PC-9 (cell line): ENCODE measurements at regions of chr17 and their contacts with region 1.

Region 1: GRCh38 chr17:29760761-29761696 is 138.3 kb upstream of the CORO6 start:
- DNase-seq: peak; percentile 65 to 85
- H3K4me3 ChIP-seq: peak overlapping the region; percentile 95
- H3K27ac ChIP-seq: peak overlapping the region; percentile 58
- H3K4me1 ChIP-seq: peaks cover 12% of the 10 kb centered on the region
- H3K27me3 ChIP-seq: no peaks in the 10 kb centered on the region
- CTCF ChIP-seq: no peak

Region 2: GRCh38 chr17:29225396-29225795 is 535.6 kb before region 1 on chr17:
- CTCF ChIA-PET with region 1: interaction called, 18 read pairs
- POLR2A ChIA-PET with region 1: no interaction called
- intact Hi-C with region 1: no loop called
- DNase-seq: no peak
- H3K4me3 ChIP-seq: no peak overlapping the region
- H3K27ac ChIP-seq: no peak overlapping the region
- H3K4me1 ChIP-seq: no peaks in the 10 kb centered on the region
- H3K27me3 ChIP-seq: no peaks in the 10 kb centered on the region
- CTCF ChIP-seq: no peak

Region 3: GRCh38 chr17:29664743-29665480 is 96.1 kb before region 1 on chr17:
- CTCF ChIA-PET with region 1: no interaction called
- POLR2A ChIA-PET with region 1: interaction called, 3 read pairs
- intact Hi-C with region 1: loop called (anchors 1 kb)
- DNase-seq: peak; percentile 15 to 92
- H3K4me3 ChIP-seq: peak overlapping the region; percentile 33; the same call in 1 of the 2 replicates
- H3K27ac ChIP-seq: peak overlapping the region; percentile 98
- H3K4me1 ChIP-seq: peaks cover 51% of the 10 kb centered on the region
- H3K27me3 ChIP-seq: no peaks in the 10 kb centered on the region
- CTCF ChIP-seq: no peak

Region 4: GRCh38 chr17:29710891-29711418 is 50.1 kb before region 1 on chr17:
- CTCF ChIA-PET with region 1: no interaction called
- POLR2A ChIA-PET with region 1: interaction called, 11 read pairs
- intact Hi-C with region 1: loop called (anchors 1 kb)
- DNase-seq: peak; percentile 77 to 96
- H3K4me3 ChIP-seq: peak overlapping the region; percentile 9; the same call in 1 of the 2 replicates
- H3K27ac ChIP-seq: peak overlapping the region; percentile 81
- H3K4me1 ChIP-seq: peaks cover 40% of the 10 kb centered on the region
- H3K27me3 ChIP-seq: no peaks in the 10 kb centered on the region
- CTCF ChIP-seq: no peak; the same call in 1 of the 2 replicates

Region 5: DNA sequence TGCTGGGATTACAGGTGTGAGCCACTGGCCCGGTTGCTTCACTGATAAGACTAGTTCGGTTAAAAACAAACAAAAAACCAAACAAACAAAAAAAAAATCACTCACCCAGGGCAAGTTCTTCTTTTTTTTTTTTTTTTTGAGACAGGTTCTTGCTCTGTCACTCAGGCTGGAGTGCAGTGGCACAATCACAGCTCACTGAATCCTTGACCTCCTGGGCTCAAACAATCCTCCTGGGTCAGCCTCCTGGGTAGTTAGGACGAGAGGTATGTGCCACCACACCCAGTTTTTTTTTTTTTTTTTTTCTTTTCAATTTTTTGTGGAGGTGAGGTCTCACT is 18.9 kb before region 1 on chr17:
- CTCF ChIA-PET with region 1: no interaction called
- POLR2A ChIA-PET with region 1: interaction called, 23 read pairs
- intact Hi-C with region 1: no loop called
- DNase-seq: peak; percentile 20 to 58
- H3K4me3 ChIP-seq: no peak overlapping the region
- H3K27ac ChIP-seq: no peak overlapping the region
- H3K4me1 ChIP-seq: peaks cover 24% of the 10 kb centered on the region
- H3K27me3 ChIP-seq: no peaks in the 10 kb centered on the region
- CTCF ChIP-seq: no peak

Region 6: GRCh38 chr17:29844339-29845048 is 83.5 kb after region 1 on chr17:
- CTCF ChIA-PET with region 1: no interaction called
- POLR2A ChIA-PET with region 1: no interaction called
- intact Hi-C with region 1: no loop called
- DNase-seq: no peak
- H3K4me3 ChIP-seq: no peak overlapping the region
- H3K27ac ChIP-seq: no peak overlapping the region
- H3K4me1 ChIP-seq: no peaks in the 10 kb centered on the region
- H3K27me3 ChIP-seq: no peaks in the 10 kb centered on the region
- CTCF ChIP-seq: no peak

Region 7: DNA sequence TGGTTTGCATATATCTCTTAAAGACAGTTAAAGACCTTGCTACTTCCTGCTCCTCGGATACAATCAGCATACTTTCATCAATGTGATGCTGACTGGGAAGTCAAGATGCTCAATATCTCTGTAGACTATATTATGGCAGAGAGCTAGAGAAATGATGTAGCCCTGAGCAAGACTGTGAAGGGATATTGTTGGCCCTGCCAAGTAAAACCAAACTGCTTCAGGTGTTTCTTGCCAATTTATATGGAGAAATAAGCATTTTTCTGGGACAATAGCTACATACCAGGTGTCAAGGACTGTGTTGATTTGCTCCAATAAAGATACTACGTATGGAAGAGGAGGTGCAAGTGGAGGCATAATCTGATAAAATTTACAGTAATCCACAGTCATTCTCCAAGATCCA is 175.7 kb after region 1 on chr17:
- CTCF ChIA-PET with region 1: no interaction called
- POLR2A ChIA-PET with region 1: no interaction called
- intact Hi-C with region 1: no loop called
- DNase-seq: no peak
- H3K4me3 ChIP-seq: no peak overlapping the region
- H3K27ac ChIP-seq: no peak overlapping the region
- H3K4me1 ChIP-seq: 0 out of 2 replicates have a peak, but pooled peaks cover 1% of the 10 kb centered on the region
- H3K27me3 ChIP-seq: no peaks in the 10 kb centered on the region
- CTCF ChIP-seq: no peak

Region 8: GRCh38 chr17:30021708-30022317 is 260.8 kb after region 1 on chr17:
- CTCF ChIA-PET with region 1: no interaction called
- POLR2A ChIA-PET with region 1: no interaction called
- intact Hi-C with region 1: no loop called
- DNase-seq: peak in 1 of 2 experiments; percentile 14
- H3K4me3 ChIP-seq: no peak overlapping the region
- H3K27ac ChIP-seq: no peak overlapping the region
- H3K4me1 ChIP-seq: no peaks in the 10 kb centered on the region; the same call in 1 of the 2 replicates
- H3K27me3 ChIP-seq: no peaks in the 10 kb centered on the region
- CTCF ChIP-seq: peak; percentile 93